Mammary epithelial cell (primary cell): ENCODE measurements at regions of chr11 and their contacts with region 1.

Region 1: GRCh38 chr11:93895106-93895862 is 44.9 kb upstream of the VSTM5 start:
- DNase-seq: peak; percentile 48
- H3K4me3 ChIP-seq: peak overlapping the region in 1 of 3 experiments; percentile 4
- H3K27ac ChIP-seq: no peak overlapping the region
- H3K4me1 ChIP-seq: no peaks in the 10 kb centered on the region
- H3K27me3 ChIP-seq: no peaks in the 10 kb centered on the region
- CTCF ChIP-seq: peak; percentile 88 to 89

Region 2: GRCh38 chr11:93801366-93801765 is 93.9 kb before region 1 on chr11:
- CTCF ChIA-PET with region 1: no interaction called
- dilution Hi-C with region 1: no loop called
- in situ Hi-C with region 1: no loop called
- intact Hi-C with region 1: no loop called
- DNase-seq: no peak
- H3K4me3 ChIP-seq: no peak overlapping the region
- H3K27ac ChIP-seq: no peak overlapping the region
- H3K4me1 ChIP-seq: no peaks in the 10 kb centered on the region
- H3K27me3 ChIP-seq: no peaks in the 10 kb centered on the region
- CTCF ChIP-seq: no peak

Region 3: GRCh38 chr11:93849751-93850593 is 45.3 kb before region 1 on chr11:
- CTCF ChIA-PET with region 1: no interaction called
- dilution Hi-C with region 1: loop called (anchors 5 kb)
- in situ Hi-C with region 1: no loop called
- intact Hi-C with region 1: no loop called
- DNase-seq: peak; percentile 1
- H3K4me3 ChIP-seq: peak overlapping the region in 2 of 3 experiments; percentile 22 to 27
- H3K27ac ChIP-seq: no peak overlapping the region
- H3K4me1 ChIP-seq: peaks cover 11% of the 10 kb centered on the region
- H3K27me3 ChIP-seq: no peaks in the 10 kb centered on the region
- CTCF ChIP-seq: no peak

Region 4: DNA sequence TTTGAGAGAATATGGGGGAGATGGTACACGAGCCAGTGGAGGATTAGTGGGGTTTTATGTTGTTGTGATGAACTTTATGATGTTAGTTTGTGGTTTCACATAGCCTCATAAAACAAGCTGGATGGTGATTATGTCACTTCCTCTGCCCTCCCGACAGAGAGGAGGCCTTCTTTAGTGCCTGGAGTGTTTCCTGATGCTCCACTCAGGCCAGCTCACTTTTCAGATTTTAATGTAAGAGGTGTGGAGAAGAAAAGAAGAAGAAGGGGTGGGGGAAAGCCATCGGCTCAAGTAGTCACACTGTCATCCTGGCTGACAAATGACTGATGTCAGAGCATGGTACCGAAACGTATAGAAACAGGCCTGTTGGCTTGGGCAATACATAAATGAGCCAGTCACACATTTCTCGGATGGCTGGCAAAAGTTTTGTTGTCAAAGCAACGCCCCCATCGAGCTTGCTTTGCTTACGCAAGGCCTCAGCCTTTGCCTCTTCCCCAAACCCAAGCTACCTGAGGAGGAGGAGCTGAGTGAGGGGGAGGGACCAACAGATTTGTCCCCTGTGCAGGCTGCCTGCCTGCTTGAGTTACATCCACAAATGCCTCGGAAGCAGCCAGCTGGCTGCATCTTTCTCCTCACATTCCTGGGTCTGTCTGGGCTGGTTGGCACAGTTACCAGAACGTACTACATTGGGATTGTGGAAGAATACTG is 125.6 kb after region 1 on chr11 and contains the start of gene HEPHL1:
- CTCF ChIA-PET with region 1: no interaction called
- dilution Hi-C with region 1: no loop called
- in situ Hi-C with region 1: no loop called
- intact Hi-C with region 1: no loop called
- DNase-seq: peak; percentile 97
- H3K4me3 ChIP-seq: peak within 1 kb of the TSS; percentile 20 to 40 (median 26)
- H3K27ac ChIP-seq: peak within 1 kb of the TSS; percentile 85
- H3K4me1 ChIP-seq: peaks cover 70% of the 10 kb centered on the region
- H3K27me3 ChIP-seq: no peaks in the 10 kb centered on the region
- CTCF ChIP-seq: no peak
- total RNA-seq, gene HEPHL1: 6.2 to 60.8 TPM

Region 5: GRCh38 chr11:94043241-94043640 is 148.0 kb after region 1 on chr11:
- CTCF ChIA-PET with region 1: no interaction called
- dilution Hi-C with region 1: no loop called
- in situ Hi-C with region 1: no loop called
- intact Hi-C with region 1: no loop called
- DNase-seq: no peak
- H3K4me3 ChIP-seq: no peak overlapping the region
- H3K27ac ChIP-seq: no peak overlapping the region
- H3K4me1 ChIP-seq: no peaks in the 10 kb centered on the region
- H3K27me3 ChIP-seq: no peaks in the 10 kb centered on the region
- CTCF ChIP-seq: no peak

Region 6: GRCh38 chr11:94183886-94184264 is 288.6 kb after region 1 on chr11:
- CTCF ChIA-PET with region 1: interaction called, 4 read pairs
- dilution Hi-C with region 1: no loop called
- in situ Hi-C with region 1: no loop called
- intact Hi-C with region 1: loop called (anchors 1 kb)
- DNase-seq: peak; percentile 48
- H3K4me3 ChIP-seq: no peak overlapping the region
- H3K27ac ChIP-seq: no peak overlapping the region
- H3K4me1 ChIP-seq: no peaks in the 10 kb centered on the region
- H3K27me3 ChIP-seq: no peaks in the 10 kb centered on the region
- CTCF ChIP-seq: peak; percentile 94 to 96

Region 7: DNA sequence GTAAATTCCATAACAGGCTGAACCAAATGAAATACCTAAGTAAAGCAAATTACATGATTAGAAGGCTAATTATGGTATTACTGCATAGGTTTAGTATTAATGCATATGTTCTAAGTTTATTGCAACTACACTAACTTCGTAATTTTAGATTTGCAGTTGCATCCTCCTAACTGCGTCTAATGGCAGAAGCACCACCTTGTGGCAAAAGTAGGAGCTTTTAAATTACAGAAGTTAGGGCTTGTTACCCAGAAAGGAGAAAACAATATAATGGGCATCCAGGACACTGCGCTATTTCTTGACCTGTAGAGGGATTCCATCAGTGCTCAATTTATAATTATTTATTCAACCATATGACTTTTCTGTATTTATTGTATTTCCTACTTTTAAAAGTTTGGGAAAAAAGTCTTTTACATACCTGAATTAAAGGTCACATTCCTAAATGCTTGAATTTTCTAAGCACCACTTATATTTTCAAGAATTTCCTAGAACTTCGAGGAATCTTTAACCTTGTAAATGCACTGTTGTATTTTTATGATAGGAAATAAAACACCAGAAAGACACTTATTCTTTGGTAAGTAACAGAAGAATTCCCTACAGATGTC is 522.2 kb after region 1 on chr11:
- CTCF ChIA-PET with region 1: interaction called, 14 read pairs
- dilution Hi-C with region 1: no loop called
- in situ Hi-C with region 1: no loop called
- intact Hi-C with region 1: loop called (anchors 1 kb)
- DNase-seq: peak; percentile 16
- H3K4me3 ChIP-seq: no peak overlapping the region
- H3K27ac ChIP-seq: no peak overlapping the region
- H3K4me1 ChIP-seq: no peaks in the 10 kb centered on the region
- H3K27me3 ChIP-seq: no peaks in the 10 kb centered on the region
- CTCF ChIP-seq: peak; percentile 47 to 71

Region 8: DNA sequence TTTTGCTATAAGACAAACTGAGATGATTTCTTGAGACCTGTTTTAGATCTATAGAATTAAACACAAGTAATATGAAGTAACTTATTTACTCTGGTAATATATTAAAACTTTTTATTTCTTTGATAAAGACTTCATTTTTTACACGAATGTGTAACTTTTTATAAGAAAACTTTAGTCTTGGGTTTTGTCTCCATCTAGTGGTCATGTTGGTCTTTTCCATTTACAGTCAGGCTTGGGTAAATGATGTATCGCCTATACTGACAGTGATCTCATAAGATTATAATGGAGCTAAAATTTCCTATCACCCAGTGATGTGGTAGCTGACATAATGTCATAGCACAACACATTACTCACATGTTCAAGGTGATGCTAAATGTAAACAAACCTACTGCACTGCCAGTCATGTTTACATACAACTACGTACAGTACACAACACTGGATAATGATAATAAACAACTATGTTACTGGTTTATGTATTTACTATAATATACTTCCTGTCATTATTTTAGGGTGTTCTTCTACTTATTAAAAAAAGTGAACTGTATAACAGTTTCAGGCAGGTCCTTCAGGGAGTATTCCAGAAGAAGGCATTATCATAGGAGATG is 609.5 kb after region 1 on chr11:
- CTCF ChIA-PET with region 1: interaction called, 12 read pairs
- dilution Hi-C with region 1: no loop called
- in situ Hi-C with region 1: loop called (anchors 10 kb)
- intact Hi-C with region 1: loop called (anchors 1 kb)
- DNase-seq: peak; percentile 38
- H3K4me3 ChIP-seq: no peak overlapping the region
- H3K27ac ChIP-seq: no peak overlapping the region
- H3K4me1 ChIP-seq: no peaks in the 10 kb centered on the region
- H3K27me3 ChIP-seq: no peaks in the 10 kb centered on the region
- CTCF ChIP-seq: peak; percentile 62 to 65